Psoas muscle (tissue), 8 donors: ENCODE measurements at regions of chr4 and their contacts with region 1.

Region 1: GRCh38 chr4:124936427-124936826 is 223.9 kb upstream of the ANKRD50 start:
- DNase-seq: peak; percentile 19 to 66
- ATAC-seq: peak; percentile 94 to 98 (median 97)
- H3K4me3 ChIP-seq: no peak overlapping the region
- H3K27ac ChIP-seq: peak overlapping the region; percentile 74
- H3K4me1 ChIP-seq: peaks cover 50% of the 10 kb centered on the region
- H3K27me3 ChIP-seq: no peaks in the 10 kb centered on the region
- CTCF ChIP-seq: no peak

Region 2: DNA sequence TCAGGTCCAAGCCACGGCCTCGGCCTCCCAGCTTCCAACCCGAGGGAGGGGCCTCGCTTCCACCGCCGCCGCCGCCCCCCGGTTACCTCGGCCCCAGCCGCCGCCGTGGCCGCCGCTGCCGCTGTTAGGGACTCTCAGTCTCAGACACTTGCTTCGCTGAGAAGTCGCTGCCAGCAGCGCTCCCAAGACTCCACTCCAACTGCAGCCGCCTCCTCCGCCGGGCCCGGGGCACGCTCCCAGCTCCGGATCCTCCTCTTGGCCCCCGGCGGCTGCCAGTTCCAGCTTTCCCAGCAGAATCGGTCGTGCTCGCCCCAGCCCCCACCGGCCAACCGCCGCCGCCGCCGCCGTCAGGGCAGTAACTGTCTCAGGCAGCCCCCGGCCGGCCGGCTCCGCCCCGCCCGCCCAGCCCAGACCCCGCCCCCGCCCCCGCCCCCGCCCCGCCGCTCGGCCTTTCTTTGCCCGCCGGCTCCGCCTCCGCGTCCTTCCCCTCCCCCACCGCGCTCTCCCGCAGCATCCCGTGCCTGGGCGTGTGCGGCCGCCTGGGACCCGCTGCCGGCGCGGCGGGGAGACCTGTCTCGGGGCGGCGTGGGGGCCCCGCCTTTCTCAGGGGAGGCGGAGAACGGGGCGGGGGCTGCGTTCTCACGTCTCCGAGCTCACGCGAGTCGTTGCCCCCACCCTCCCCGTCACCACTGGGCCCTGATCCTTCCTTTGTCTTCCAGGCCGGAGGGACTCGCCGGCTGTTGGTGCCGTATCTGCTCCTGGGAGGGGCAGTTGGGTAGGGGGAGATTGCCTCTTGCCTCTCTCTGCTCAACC is 223.8 kb before region 1 on chr4 and contains the start of gene ANKRD50:
- intact Hi-C with region 1: loop called in 1 of 2 experiments (anchors 10 kb)
- DNase-seq: peak; percentile 89 to 92
- ATAC-seq: peak; percentile 87 to 91 (median 90)
- H3K4me3 ChIP-seq: peak within 1 kb of the TSS; percentile 83
- H3K27ac ChIP-seq: peak within 1 kb of the TSS; percentile 90
- H3K4me1 ChIP-seq: peaks cover 22% of the 10 kb centered on the region
- H3K27me3 ChIP-seq: no peaks in the 10 kb centered on the region
- CTCF ChIP-seq: no peak
- total RNA-seq, gene ANKRD50: 2.9 to 7.0 (median 4.8) TPM

Region 3: DNA sequence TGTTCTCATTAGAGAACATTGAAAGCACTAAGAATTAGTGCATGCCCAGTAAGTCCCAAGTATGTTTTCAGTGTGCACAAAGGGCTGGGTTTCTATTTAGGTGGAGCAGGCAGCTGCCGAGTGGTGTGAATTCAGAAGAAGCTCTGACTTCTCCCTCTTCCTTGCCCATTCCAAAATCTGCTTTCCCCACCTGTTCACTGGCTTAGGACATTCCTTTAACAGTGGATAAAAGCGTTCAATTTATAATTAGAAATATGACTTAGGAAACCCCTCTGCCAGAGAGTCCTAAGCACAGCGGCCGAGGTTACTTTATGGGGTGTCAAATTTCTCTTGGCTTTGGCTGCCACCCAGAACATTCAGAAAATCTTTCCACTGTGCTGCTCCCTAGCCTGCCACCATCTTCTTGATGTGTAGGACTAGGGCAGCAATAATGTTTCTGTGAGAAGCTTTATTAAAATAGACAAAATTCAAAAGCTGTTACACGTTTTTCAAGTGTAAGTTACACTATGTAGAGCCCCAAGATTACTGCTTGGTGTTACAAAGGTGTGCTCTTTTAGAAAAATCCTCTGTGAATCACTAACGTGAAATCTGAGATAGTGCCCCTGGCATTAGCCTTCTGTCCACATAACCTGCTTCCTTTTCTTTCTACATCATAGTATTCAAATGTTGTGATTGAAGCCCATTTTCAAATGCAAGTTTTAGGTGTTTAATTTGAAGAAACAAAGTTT is 32.3 kb before region 1 on chr4:
- intact Hi-C with region 1: loop called in 1 of 2 experiments (anchors 1 kb)
- DNase-seq: peak; percentile 13 to 54
- ATAC-seq: peak; percentile 94 to 99 (median 98)
- H3K4me3 ChIP-seq: no peak overlapping the region
- H3K27ac ChIP-seq: peak overlapping the region; percentile 59
- H3K4me1 ChIP-seq: peaks cover 27% of the 10 kb centered on the region
- H3K27me3 ChIP-seq: no peaks in the 10 kb centered on the region
- CTCF ChIP-seq: no peak